Activated naive CD4-positive, alpha-beta T cell treated with anti-CD3 and anti-CD28 coated beads, Interleukin-2, amount 10 ng/mL, durations not matched to agents 7 days and 5 days (primary cell): ENCODE measurements at regions of chr3 and their contacts with region 1.

Region 1: GRCh38 chr3:128969993-128970739 is 23.7 kb downstream of the CFAP92 start:
- DNase-seq: peak; percentile 79
- H3K4me3 Mint-ChIP-seq: no peak overlapping the region
- H3K27ac Mint-ChIP-seq: no peak overlapping the region
- H3K4me1 Mint-ChIP-seq: peaks cover 3% of the 10 kb centered on the region
- H3K27me3 Mint-ChIP-seq: peaks cover 14% of the 10 kb centered on the region

Region 2: DNA sequence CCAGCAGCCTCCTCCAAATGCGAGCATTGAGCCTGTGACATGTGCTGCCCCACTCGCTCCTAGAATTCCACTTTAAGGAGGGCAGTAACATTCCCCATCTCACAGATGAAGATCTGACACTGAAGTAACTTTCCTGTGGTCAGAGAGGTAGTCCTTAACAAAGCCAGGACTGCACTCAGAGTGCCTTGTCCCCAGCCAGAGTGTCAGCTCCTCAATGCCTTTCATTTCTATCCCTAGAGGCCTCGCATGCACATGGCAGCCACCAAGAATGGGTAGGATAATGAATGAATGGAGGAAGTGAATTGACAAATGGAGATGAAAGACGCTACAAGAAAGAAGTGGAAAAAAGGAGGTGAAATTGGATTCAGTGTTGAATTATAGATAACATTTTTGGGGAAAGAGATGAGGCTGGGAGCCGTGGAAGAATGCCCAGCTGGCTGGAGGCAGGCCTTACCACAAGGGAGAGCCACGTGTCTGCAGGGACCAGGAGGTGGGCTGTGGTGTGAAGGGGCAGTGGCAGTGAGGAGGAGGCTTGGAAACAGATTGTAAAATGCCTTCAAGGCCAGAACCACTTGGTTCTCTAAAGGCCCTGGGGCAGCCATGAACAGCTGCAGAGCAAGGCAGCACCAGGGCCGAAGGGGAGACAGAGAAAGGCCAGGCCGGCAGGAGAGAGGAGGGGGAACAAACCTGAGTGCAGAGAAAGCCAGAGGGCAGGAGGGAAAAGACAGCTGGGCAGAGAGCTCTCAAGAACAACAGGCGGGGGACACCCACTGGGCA is 13.3 kb after region 1 on chr3:
- CTCF ChIA-PET with region 1: interaction called, 28 read pairs
- DNase-seq: no peak
- H3K4me3 Mint-ChIP-seq: no peak overlapping the region
- H3K27ac Mint-ChIP-seq: no peak overlapping the region
- H3K4me1 Mint-ChIP-seq: peaks cover 2% of the 10 kb centered on the region
- H3K27me3 Mint-ChIP-seq: peaks cover 20% of the 10 kb centered on the region

Region 3: GRCh38 chr3:129016356-129016719 is 46.2 kb after region 1 on chr3:
- CTCF ChIA-PET with region 1: interaction called, 59 read pairs
- DNase-seq: peak; percentile 77
- H3K4me3 Mint-ChIP-seq: peak overlapping the region; percentile 64
- H3K27ac Mint-ChIP-seq: peak overlapping the region; percentile 93
- H3K4me1 Mint-ChIP-seq: peaks cover 47% of the 10 kb centered on the region
- H3K27me3 Mint-ChIP-seq: peaks cover 3% of the 10 kb centered on the region

Region 4: DNA sequence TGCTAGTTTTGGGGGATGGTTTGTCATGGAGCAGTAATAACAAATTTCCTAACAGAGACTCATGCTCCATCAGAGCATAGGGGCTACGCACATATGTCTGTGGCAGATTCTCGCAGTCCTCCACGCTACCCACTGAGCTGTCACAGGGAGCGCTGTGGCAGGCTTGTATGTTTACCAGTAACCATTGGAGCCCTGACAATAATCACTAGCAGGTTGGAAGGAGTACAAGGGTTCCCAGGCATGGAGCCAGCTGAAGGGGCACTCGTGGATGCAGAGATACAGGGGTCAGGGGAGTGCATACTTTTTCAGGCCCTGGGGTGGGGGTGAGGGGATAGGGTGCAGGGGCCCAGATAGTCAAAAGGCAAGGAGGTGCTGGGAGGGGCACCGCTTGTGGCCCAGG is 82.5 kb after region 1 on chr3:
- CTCF ChIA-PET with region 1: interaction called, 50 read pairs
- DNase-seq: no peak
- H3K4me3 Mint-ChIP-seq: no peak overlapping the region
- H3K27ac Mint-ChIP-seq: no peak overlapping the region
- H3K4me1 Mint-ChIP-seq: peaks cover 10% of the 10 kb centered on the region
- H3K27me3 Mint-ChIP-seq: peaks cover 24% of the 10 kb centered on the region

Region 5: GRCh38 chr3:129132097-129132866 is 162.1 kb after region 1 on chr3:
- CTCF ChIA-PET with region 1: interaction called, 12 read pairs
- DNase-seq: no peak
- H3K4me3 Mint-ChIP-seq: no peak overlapping the region
- H3K27ac Mint-ChIP-seq: peak overlapping the region; percentile 37
- H3K4me1 Mint-ChIP-seq: peaks cover 6% of the 10 kb centered on the region
- H3K27me3 Mint-ChIP-seq: no peaks in the 10 kb centered on the region

Region 6: GRCh38 chr3:129238945-129239706 is 269.0 kb after region 1 on chr3:
- CTCF ChIA-PET with region 1: interaction called, 88 read pairs
- DNase-seq: peak; percentile 71
- H3K4me3 Mint-ChIP-seq: peak overlapping the region; percentile 50
- H3K27ac Mint-ChIP-seq: peak overlapping the region; percentile 99
- H3K4me1 Mint-ChIP-seq: peaks cover 61% of the 10 kb centered on the region
- H3K27me3 Mint-ChIP-seq: no peaks in the 10 kb centered on the region